CD8-positive, alpha-beta memory T cell (primary cell): ENCODE measurements at regions of chr12 and their contacts with region 1.

Region 1: GRCh38 chr12:53321074-53321814 is at the start of gene AAAS:
- DNase-seq: peak; percentile 94 to 97 (median 95)
- H3K4me3 ChIP-seq: peak within 1 kb of the TSS; percentile 99
- H3K4me3 Mint-ChIP-seq: peak within 1 kb of the TSS; percentile 95 to 100 (median 98)
- H3K27ac ChIP-seq: peak within 1 kb of the TSS; percentile 81
- H3K27ac Mint-ChIP-seq: peak within 1 kb of the TSS; percentile 95 to 99 (median 96)
- H3K4me1 ChIP-seq: peaks cover 31% of the 10 kb centered on the region
- H3K4me1 Mint-ChIP-seq: peaks cover 40 to 50% (median 40%) of the 10 kb centered on the region in 3 donors
- H3K27me3 ChIP-seq: no peaks in the 10 kb centered on the region
- H3K27me3 Mint-ChIP-seq: peaks cover 0 to 2% of the 10 kb centered on the region in 2 donors
- total RNA-seq, gene AAAS: 77.9 to 79.7 TPM

Region 2: GRCh38 chr12:53159195-53159839 is 161.9 kb before region 1 on chr12:
- CTCF ChIA-PET with region 1: interaction called, 18 read pairs
- POLR2A ChIA-PET with region 1: no interaction called
- DNase-seq: peak; percentile 76 to 91 (median 83)
- H3K4me3 ChIP-seq: no peak overlapping the region
- H3K4me3 Mint-ChIP-seq: no peak overlapping the region
- H3K27ac ChIP-seq: no peak overlapping the region
- H3K27ac Mint-ChIP-seq: peak overlapping the region in 6 of 8 donors; percentile 26 to 81 (median 42)
- H3K4me1 ChIP-seq: peaks cover 8% of the 10 kb centered on the region
- H3K4me1 Mint-ChIP-seq: peaks cover 6 to 8% (median 6%) of the 10 kb centered on the region in 3 donors
- H3K27me3 ChIP-seq: no peaks in the 10 kb centered on the region
- H3K27me3 Mint-ChIP-seq: no peaks in the 10 kb centered on the region

Region 3: DNA sequence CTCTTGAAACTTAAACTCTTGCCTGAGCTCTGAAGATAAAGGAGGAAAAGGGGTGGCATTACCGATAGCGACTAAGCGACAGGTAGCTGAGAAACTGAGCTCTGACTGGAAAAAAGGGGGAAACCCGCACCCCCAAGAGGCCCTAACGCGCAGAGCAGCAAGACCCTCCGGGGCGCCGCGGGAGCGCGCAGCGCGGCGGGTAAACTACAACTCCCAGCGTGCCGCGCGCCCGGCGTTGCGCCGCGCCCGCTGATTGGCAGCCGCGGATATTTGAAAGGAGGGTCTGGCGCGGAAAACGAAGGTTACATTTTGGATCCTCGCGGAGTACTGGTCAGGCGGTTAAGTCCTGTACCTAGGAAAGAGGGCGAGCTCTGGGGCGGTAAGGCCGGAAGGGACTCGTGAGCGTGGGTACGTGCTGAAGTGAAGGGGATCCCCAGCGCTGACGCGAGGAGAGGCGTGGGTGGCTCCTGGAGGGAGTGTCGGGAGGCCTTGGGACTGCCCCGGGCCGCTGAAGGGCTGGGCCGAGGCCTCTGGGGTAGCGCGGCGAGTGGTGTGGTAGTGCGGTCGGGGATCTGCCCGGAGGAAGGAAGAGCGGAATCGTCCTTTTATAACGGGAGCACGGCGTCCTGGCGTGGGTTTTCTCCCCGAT is 53.1 kb before region 1 on chr12 and contains the start of gene ESPL1:
- CTCF ChIA-PET with region 1: interaction called, 19 read pairs
- POLR2A ChIA-PET with region 1: interaction called, 3 read pairs
- DNase-seq: peak; percentile 75 to 88 (median 84)
- H3K4me3 ChIP-seq: peak within 1 kb of the TSS; percentile 83
- H3K4me3 Mint-ChIP-seq: peak within 1 kb of the TSS; percentile 88 to 99 (median 94)
- H3K27ac ChIP-seq: peak within 1 kb of the TSS; percentile 67
- H3K27ac Mint-ChIP-seq: peak within 1 kb of the TSS; percentile 52 to 99 (median 90)
- H3K4me1 ChIP-seq: peaks cover 13% of the 10 kb centered on the region
- H3K4me1 Mint-ChIP-seq: peaks cover 16 to 21% (median 20%) of the 10 kb centered on the region in 3 donors
- H3K27me3 ChIP-seq: no peaks in the 10 kb centered on the region
- H3K27me3 Mint-ChIP-seq: no peaks in the 10 kb centered on the region
- total RNA-seq, gene ESPL1: 58.4 to 63.4 TPM

Region 4: GRCh38 chr12:53302903-53303302 is 18.3 kb before region 1 on chr12:
- CTCF ChIA-PET with region 1: interaction called, 115 read pairs
- POLR2A ChIA-PET with region 1: interaction called, 13 read pairs
- DNase-seq: no peak
- H3K4me3 ChIP-seq: no peak overlapping the region
- H3K4me3 Mint-ChIP-seq: peak overlapping the region in 4 of 7 donors; percentile 21 to 97 (median 54)
- H3K27ac ChIP-seq: no peak overlapping the region
- H3K27ac Mint-ChIP-seq: peak overlapping the region in 6 of 8 donors; percentile 20 to 82 (median 77)
- H3K4me1 ChIP-seq: peaks cover 16% of the 10 kb centered on the region
- H3K4me1 Mint-ChIP-seq: peaks cover 41 to 54% (median 49%) of the 10 kb centered on the region in 3 donors
- H3K27me3 ChIP-seq: no peaks in the 10 kb centered on the region
- H3K27me3 Mint-ChIP-seq: no peaks in the 10 kb centered on the region

Region 5: GRCh38 chr12:53379389-53380103 is 58.3 kb after region 1 on chr12:
- CTCF ChIA-PET with region 1: interaction called, 12 read pairs
- POLR2A ChIA-PET with region 1: interaction called, 9 read pairs
- DNase-seq: peak in 4 of 5 donors; percentile 83 to 100 (median 99)
- H3K4me3 ChIP-seq: peak overlapping the region; percentile 63
- H3K4me3 Mint-ChIP-seq: no peak overlapping the region
- H3K27ac ChIP-seq: peak overlapping the region; percentile 73
- H3K27ac Mint-ChIP-seq: no peak overlapping the region
- H3K4me1 ChIP-seq: peaks cover 42% of the 10 kb centered on the region
- H3K4me1 Mint-ChIP-seq: peaks cover 30 to 37% (median 36%) of the 10 kb centered on the region in 3 donors
- H3K27me3 ChIP-seq: no peaks in the 10 kb centered on the region
- H3K27me3 Mint-ChIP-seq: no peaks in the 10 kb centered on the region

Region 6: GRCh38 chr12:53508534-53509199 is 187.4 kb after region 1 on chr12:
- CTCF ChIA-PET with region 1: interaction called, 23 read pairs
- POLR2A ChIA-PET with region 1: interaction called, 4 read pairs
- DNase-seq: peak; percentile 63 to 85 (median 75)
- H3K4me3 ChIP-seq: no peak overlapping the region
- H3K4me3 Mint-ChIP-seq: peak overlapping the region in 2 of 7 donors; percentile 7 to 40
- H3K27ac ChIP-seq: no peak overlapping the region
- H3K27ac Mint-ChIP-seq: peak overlapping the region in 7 of 8 donors; percentile 0 to 87 (median 68)
- H3K4me1 ChIP-seq: peaks cover 7% of the 10 kb centered on the region
- H3K4me1 Mint-ChIP-seq: peaks cover 4 to 10% (median 9%) of the 10 kb centered on the region in 3 donors
- H3K27me3 ChIP-seq: no peaks in the 10 kb centered on the region
- H3K27me3 Mint-ChIP-seq: no peaks in the 10 kb centered on the region